WTC11 (cell line): ENCODE measurements at regions of chr5 and their contacts with region 1.

Region 1: DNA sequence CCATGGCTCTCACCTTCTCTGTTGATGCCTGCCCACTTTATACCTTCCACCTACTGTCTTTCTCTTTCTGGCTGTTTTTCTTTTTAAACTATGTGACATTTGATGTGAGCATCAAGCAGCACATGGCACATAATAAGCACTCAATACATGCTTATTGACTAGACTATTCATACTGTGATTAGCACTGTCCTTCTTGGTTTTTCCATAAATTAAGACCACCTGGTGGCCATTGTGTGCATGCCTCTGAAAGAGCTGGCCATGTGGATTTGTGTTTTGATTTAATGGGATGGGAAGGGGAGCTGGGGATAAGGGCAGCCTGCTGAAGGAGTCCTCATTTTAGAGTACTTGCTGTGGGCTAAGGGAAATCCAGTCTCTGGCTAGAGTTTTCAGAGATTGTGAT is 79.4 kb downstream of the ARHGEF28 start:
- DNase-seq: no peak
- ATAC-seq: no peak
- H3K4me3 Mint-ChIP-seq: no peak overlapping the region
- H3K27ac Mint-ChIP-seq: no peak overlapping the region
- H3K4me1 Mint-ChIP-seq: no peaks in the 10 kb centered on the region
- H3K27me3 Mint-ChIP-seq: no peaks in the 10 kb centered on the region
- CTCF ChIP-seq: no peak

Region 2: DNA sequence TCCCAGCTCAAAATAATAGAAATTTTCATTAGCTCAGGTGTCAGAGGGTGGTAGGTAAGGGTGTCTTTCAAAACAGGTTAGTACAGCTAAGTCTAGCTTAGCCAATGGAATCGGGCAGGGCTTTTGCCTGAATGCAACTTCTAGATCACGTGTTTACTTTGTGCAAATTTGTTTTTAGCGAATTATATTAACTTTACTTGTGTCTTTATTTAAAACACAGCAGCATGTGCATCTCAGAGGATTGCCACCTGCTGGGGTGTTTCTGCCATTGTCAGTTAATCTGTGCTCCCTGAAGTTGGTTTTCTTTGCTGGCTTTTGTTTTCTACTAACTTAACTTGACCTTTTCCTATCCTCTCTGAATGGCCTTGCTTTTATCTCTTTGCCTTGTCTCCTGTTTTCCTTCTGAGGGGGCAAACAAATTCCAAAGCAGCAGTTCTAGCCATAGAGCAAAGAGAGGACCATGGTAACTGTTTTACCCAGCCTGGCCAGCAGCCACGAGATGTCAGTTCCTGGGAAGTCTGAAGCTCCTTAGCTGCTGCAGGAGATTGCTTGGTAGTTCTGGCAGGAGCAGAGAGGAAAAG is 11.8 kb before region 1 on chr5:
- CTCF ChIA-PET with region 1: interaction called, 11 read pairs
- POLR2A ChIA-PET with region 1: no interaction called
- DNase-seq: peak; percentile 14
- ATAC-seq: peak; percentile 72
- H3K4me3 Mint-ChIP-seq: no peak overlapping the region
- H3K27ac Mint-ChIP-seq: no peak overlapping the region
- H3K4me1 Mint-ChIP-seq: peaks cover 30% of the 10 kb centered on the region
- H3K27me3 Mint-ChIP-seq: no peaks in the 10 kb centered on the region; the same call in 1 of the 2 replicates
- CTCF ChIP-seq: 0 out of 2 replicates have a peak, but pooled peaks have one; percentile 3